Tibial artery (tissue), 4 donors: ENCODE measurements at regions of chr19 and their contacts with region 1.

Region 1: GRCh38 chr19:38869856-38870607 is 8.0 kb downstream of the RINL start:
- DNase-seq: peak; percentile 78 to 87
- H3K4me3 ChIP-seq: peak overlapping the region; percentile 46 to 59
- H3K27ac ChIP-seq: peak overlapping the region; percentile 5 to 10
- H3K4me1 ChIP-seq: peaks cover 0 to 19% (median 14%) of the 10 kb centered on the region in 4 donors
- H3K27me3 ChIP-seq: no peaks in the 10 kb centered on the region
- CTCF ChIP-seq: peak; percentile 70 to 83

Region 2: DNA sequence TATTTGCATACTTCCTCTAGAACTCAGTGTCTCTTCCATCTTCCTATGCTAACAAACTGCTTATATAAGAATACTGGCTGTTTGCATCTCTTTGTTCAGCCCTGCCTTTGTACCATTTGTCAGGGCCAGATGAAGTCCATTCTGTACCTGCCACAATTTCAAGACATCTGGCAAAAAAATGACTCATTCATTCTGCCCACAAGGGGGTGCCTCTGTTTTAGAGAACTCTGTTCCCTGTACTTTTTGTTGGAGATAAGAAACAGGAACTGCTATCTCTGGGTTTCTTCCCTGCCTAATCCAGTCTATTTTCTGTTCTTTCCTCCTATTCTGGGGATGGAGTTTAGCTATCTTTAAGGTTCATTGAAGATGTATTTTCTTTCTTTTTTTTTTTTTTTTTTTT is 1930.9 kb before region 1 on chr19:
- intact Hi-C with region 1: no loop called
- DNase-seq: no peak
- H3K4me3 ChIP-seq: no peak overlapping the region
- H3K27ac ChIP-seq: no peak overlapping the region
- H3K4me1 ChIP-seq: no peaks in the 10 kb centered on the region
- H3K27me3 ChIP-seq: no peaks in the 10 kb centered on the region
- CTCF ChIP-seq: no peak

Region 3: GRCh38 chr19:38769635-38770211 is 100.3 kb before region 1 on chr19:
- intact Hi-C with region 1: loop called (anchors 10 kb)
- DNase-seq: peak; percentile 86 to 89
- H3K4me3 ChIP-seq: peak overlapping the region; percentile 34 to 44
- H3K27ac ChIP-seq: peak overlapping the region in 1 of 2 donors; percentile 37
- H3K4me1 ChIP-seq: peaks cover 0 to 9% (median 3%) of the 10 kb centered on the region in 4 donors
- H3K27me3 ChIP-seq: no peaks in the 10 kb centered on the region
- CTCF ChIP-seq: peak; percentile 78 to 83

Region 4: GRCh38 chr19:38784224-38784623 is 85.8 kb before region 1 on chr19:
- intact Hi-C with region 1: no loop called
- DNase-seq: no peak
- H3K4me3 ChIP-seq: no peak overlapping the region
- H3K27ac ChIP-seq: no peak overlapping the region
- H3K4me1 ChIP-seq: no peaks in the 10 kb centered on the region
- H3K27me3 ChIP-seq: peaks cover 0 to 13% of the 10 kb centered on the region in 2 donors
- CTCF ChIP-seq: no peak

Region 5: DNA sequence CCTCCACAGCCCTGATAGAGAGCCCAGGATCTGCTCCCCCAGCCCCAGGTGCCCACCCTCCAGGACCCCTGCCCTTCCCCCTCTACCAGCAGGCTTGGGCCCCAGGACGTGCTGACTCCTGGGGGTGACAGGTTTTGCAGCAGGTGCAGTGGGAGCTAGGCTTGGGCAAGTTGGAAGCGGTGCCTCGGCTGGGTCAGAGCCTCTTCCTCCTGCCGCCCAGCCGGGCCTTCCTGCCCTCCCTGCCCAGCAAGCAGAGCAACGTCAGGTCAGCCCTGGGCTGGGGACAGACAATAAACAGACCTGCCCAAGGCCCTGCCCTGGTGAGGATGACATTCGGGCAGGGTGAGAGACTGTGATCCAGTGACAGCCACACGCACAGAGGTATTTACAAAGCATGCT is 317.5 kb after region 1 on chr19:
- intact Hi-C with region 1: no loop called
- DNase-seq: no peak
- H3K4me3 ChIP-seq: no peak overlapping the region
- H3K27ac ChIP-seq: no peak overlapping the region
- H3K4me1 ChIP-seq: no peaks in the 10 kb centered on the region
- H3K27me3 ChIP-seq: peaks cover 0 to 26% of the 10 kb centered on the region in 2 donors
- CTCF ChIP-seq: no peak